GM10248 (cell line): ENCODE measurements at regions of chr14 and their contacts with region 1.

Region 1: GRCh38 chr14:22900081-22900799 is 17.2 kb downstream of the REM2 start:
- DNase-seq: peak; percentile 70
- CTCF ChIP-seq: peak; percentile 59

Region 2: GRCh38 chr14:22836301-22837113 is 63.7 kb before region 1 on chr14 and contains the start of gene MMP14:
- CTCF ChIA-PET with region 1: interaction called, 11 read pairs
- POLR2A ChIA-PET with region 1: no interaction called
- DNase-seq: no peak
- CTCF ChIP-seq: no peak

Region 3: DNA sequence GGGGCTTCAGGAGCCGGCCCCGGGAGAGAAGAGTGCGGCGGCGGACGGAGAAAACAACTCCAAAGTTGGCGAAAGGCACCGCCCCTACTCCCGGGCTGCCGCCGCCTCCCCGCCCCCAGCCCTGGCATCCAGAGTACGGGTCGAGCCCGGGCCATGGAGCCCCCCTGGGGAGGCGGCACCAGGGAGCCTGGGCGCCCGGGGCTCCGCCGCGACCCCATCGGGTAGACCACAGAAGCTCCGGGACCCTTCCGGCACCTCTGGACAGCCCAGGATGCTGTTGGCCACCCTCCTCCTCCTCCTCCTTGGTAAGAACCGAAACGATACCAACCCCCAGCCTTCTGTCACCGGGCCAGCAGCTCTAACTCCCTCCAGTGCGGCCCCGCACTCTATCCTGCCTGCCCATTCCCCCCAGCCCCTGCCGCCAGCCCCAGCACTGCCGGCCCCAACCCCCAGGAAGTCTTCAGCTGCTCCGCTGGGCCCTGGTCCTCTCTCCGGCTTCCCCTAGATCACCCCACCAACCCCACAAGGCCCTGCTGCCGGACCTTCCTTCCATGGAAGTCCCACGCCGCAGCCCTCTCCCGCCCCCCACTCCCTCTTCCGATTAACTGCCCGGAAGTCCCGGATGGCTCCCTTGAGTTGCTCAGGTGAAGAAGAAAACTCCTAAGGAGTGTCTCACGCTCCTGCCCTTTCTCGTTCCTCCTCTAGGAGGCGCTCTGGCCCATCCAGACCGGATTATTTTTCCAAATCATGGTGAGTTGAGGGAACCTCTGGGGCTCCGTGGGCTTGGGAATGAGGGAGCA is 28.0 kb before region 1 on chr14:
- CTCF ChIA-PET with region 1: interaction called, 68 read pairs
- POLR2A ChIA-PET with region 1: no interaction called
- DNase-seq: peak; percentile 80
- CTCF ChIP-seq: peak; percentile 94

Region 4: GRCh38 chr14:22886500-22887259 is 13.6 kb before region 1 on chr14:
- CTCF ChIA-PET with region 1: interaction called, 74 read pairs
- POLR2A ChIA-PET with region 1: interaction called, 5 read pairs
- DNase-seq: peak; percentile 89
- CTCF ChIP-seq: peak; percentile 40

Region 5: DNA sequence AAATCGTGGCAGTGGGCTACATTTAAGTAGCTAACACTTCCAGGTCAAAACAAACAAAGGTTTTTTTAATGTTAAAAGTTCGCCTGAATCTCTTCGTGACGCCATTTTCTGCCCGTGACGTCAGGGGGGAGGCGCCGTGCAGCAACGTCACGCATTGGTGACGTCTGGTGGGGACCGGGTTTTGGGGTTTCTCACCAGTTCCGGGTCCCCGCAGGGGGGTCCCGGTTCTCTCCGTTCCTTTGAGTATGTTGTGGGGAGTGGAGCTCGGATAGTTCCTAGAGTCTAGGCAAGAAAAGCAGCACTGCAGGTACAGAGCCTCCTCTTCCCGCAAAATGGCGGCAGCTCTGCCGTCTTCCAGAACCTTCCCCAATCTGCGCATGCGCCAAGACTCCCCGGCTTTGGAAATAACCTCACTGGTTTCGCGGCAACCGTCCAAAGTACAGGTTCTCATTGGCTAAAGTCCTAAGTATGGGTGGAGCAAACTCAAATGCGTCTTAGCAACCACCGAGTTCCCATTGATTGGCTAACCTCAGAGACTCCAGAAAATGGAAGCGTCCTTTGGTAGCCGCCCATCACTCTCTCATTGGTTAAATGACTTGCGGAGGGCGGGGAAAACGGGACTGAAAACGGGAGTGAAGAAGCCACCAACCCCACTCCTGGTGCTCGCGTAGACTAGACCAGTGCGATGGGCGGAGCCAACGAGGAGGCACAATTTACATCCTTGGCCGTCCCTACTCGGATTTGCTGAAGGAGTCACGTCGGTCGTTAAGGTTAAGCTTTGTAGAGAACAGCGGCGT is 18.8 kb after region 1 on chr14 and contains the start of gene RBM23:
- CTCF ChIA-PET with region 1: interaction called, 68 read pairs
- POLR2A ChIA-PET with region 1: interaction called, 5 read pairs
- DNase-seq: peak; percentile 94
- CTCF ChIP-seq: no peak

Region 6: DNA sequence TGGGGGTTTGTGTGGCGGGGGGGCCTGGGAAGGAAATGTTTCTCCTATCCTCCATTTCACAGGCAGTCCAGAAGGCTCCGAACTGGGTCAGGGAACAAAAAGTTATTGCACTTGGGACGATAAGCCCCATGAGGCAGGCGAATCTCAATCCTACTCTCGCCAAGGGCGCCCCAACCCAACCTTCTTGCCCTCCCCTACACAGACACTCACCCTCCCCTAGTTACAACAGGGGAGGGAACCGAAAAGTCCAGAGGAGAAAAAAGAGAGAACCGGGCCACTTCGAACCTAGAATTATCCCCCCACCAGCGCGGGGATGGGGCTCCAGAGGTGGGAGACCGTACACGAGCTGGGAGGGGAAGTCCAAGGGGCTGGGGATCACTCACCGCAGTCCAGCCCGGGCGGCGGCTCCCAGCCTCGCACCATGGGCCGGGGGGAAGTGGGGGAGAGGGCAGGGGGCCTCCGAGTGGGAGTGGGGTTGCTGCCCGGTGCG is 385.3 kb after region 1 on chr14:
- CTCF ChIA-PET with region 1: no interaction called
- POLR2A ChIA-PET with region 1: no interaction called
- DNase-seq: no peak
- CTCF ChIP-seq: no peak